ENCODE measurements at regions of chr22 and their contacts with region 1.

Region 1: GRCh38 chr22:30634471-30635233 is 929 bp upstream of the SLC35E4 start:
- DNase-seq: peak; percentile 82
- H3K4me3 Mint-ChIP-seq: peak overlapping the region; percentile 85
- H3K27ac Mint-ChIP-seq: peak overlapping the region; percentile 92
- H3K4me1 Mint-ChIP-seq: peaks cover 29% of the 10 kb centered on the region
- H3K27me3 Mint-ChIP-seq: no peaks in the 10 kb centered on the region

Region 2: DNA sequence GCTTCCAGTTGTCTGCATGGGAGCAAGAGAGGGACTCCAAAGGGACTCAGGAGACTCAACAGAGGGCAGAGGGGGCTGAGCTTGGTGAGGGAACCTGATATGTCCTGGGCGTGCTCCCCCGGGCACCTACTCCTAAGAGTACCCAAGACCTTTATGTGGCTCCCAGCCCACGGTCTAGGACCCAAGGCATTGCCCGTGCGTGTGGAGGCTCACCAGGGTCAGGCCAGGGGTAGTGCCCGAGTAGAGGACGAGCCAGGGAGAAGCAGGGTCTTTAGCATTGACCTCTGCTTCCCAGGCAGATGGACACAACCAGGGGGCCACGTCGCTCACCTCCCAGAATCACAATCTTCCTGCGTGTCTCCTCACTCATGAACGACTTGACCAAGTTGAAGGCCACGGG is 142.5 kb before region 1 on chr22:
- intact Hi-C with region 1: no loop called
- DNase-seq: no peak
- H3K4me3 Mint-ChIP-seq: no peak overlapping the region
- H3K27ac Mint-ChIP-seq: no peak overlapping the region
- H3K4me1 Mint-ChIP-seq: no peaks in the 10 kb centered on the region
- H3K27me3 Mint-ChIP-seq: peaks cover 6% of the 10 kb centered on the region

Region 3: GRCh38 chr22:30649430-30650007 is 14.9 kb after region 1 on chr22:
- intact Hi-C with region 1: loop called (anchors 1 kb)
- DNase-seq: peak; percentile 72
- H3K4me3 Mint-ChIP-seq: peak overlapping the region; percentile 45
- H3K27ac Mint-ChIP-seq: peak overlapping the region; percentile 89
- H3K4me1 Mint-ChIP-seq: peaks cover 47% of the 10 kb centered on the region
- H3K27me3 Mint-ChIP-seq: no peaks in the 10 kb centered on the region

Region 4: DNA sequence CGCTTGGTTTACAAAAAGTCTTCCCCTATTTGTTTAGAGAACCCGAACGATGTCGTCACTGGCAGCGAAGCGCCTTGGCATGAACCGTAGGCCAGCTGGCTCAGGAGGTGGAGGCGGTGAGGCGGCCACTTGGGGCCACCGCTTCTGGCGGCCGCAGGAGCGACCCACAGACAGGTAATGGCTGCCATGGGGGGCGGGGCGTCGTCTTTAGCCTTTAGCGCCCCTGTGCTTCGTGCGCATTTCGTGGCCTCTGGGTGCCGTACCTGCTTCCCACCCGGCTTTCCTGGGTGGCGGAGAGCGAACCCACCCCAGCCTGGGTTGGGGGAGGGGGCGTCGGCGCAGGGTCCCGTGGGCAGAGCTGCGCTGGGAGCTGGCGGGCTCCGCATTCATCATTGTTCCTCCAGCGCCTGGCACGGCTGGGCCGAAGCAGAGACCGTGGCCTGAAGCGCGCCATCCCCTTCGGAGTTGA is 59.6 kb after region 1 on chr22:
- intact Hi-C with region 1: loop called (anchors 1 kb)
- DNase-seq: peak; percentile 44
- H3K4me3 Mint-ChIP-seq: peak overlapping the region; percentile 88
- H3K27ac Mint-ChIP-seq: no peak overlapping the region
- H3K4me1 Mint-ChIP-seq: peaks cover 21% of the 10 kb centered on the region
- H3K27me3 Mint-ChIP-seq: peaks cover 11% of the 10 kb centered on the region

Region 5: DNA sequence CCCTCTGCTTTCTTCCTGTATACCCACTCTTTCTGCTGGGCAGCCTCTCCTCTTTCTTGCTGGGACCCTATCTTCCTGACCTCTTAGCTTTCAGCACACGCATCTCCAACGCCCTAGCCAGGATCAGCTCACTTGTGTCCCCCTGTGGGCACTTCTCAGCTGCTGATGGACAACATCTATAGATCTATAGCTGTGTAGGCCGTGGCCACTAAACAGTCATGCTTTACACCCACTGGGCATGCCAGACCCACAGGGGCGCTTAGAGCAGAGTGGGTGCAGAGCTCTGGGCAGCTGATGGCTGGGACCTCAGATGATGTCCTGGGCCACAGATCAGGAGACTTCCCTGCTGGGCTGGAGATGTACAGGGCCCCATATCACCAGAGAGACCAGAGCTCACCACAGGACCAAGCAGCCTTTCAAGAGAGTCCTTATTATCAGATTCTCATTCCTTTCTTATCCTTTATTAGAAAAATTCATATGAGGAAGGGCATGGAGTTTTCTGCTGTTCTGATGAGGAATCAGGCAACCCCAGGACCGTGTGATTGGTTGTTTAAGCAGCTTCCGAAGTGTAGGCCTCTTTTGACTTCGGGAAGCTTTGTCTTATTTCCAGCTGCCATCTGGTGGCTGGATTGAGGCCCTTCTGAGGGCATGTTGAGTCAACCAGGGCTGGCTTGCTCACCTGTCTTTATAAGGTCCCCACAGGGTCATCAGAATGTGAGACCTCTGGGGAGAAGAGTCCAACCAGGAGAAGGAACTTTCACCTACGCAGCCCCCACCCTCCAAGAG is 120.5 kb after region 1 on chr22:
- intact Hi-C with region 1: loop called (anchors 1 kb)
- DNase-seq: peak; percentile 45
- H3K4me3 Mint-ChIP-seq: no peak overlapping the region
- H3K27ac Mint-ChIP-seq: peak overlapping the region; percentile 29
- H3K4me1 Mint-ChIP-seq: peaks cover 11% of the 10 kb centered on the region
- H3K27me3 Mint-ChIP-seq: peaks cover 4% of the 10 kb centered on the region

Region 6: GRCh38 chr22:30920407-30920806 is 285.8 kb after region 1 on chr22:
- intact Hi-C with region 1: loop called (anchors 1 kb)
- DNase-seq: peak; percentile 69
- H3K4me3 Mint-ChIP-seq: peak overlapping the region; percentile 64
- H3K27ac Mint-ChIP-seq: peak overlapping the region; percentile 9
- H3K4me1 Mint-ChIP-seq: peaks cover 23% of the 10 kb centered on the region
- H3K27me3 Mint-ChIP-seq: no peaks in the 10 kb centered on the region

Region 7: GRCh38 chr22:31107178-31107893 is 472.7 kb after region 1 on chr22 and contains the start of gene SELENOM:
- intact Hi-C with region 1: loop called (anchors 1 kb)
- DNase-seq: peak; percentile 86
- H3K4me3 Mint-ChIP-seq: peak within 1 kb of the TSS; percentile 83
- H3K27ac Mint-ChIP-seq: peak within 1 kb of the TSS; percentile 33
- H3K4me1 Mint-ChIP-seq: peaks cover 19% of the 10 kb centered on the region
- H3K27me3 Mint-ChIP-seq: peaks cover 6% of the 10 kb centered on the region
- total RNA-seq, gene SELENOM: 6.4 and 9.8 TPM in 2 replicates

Measured in activated T-helper 1 cell treated with anti-CD3 and anti-CD28 coated beads, Interleukin-12 subunit alpha, Interleukin-12 subunit beta, Interleukin-2, Interleukin-4 antibody, amounts not matched to agents 30 ng/mL and 10 ng/mL and 1 ng/mL, durations not matched to agents 14 hours and 24 hours and 36 hours (primary cell).